Psoas muscle (tissue), 8 donors: ENCODE measurements at regions of chr16 and their contacts with region 1.

Region 1: DNA sequence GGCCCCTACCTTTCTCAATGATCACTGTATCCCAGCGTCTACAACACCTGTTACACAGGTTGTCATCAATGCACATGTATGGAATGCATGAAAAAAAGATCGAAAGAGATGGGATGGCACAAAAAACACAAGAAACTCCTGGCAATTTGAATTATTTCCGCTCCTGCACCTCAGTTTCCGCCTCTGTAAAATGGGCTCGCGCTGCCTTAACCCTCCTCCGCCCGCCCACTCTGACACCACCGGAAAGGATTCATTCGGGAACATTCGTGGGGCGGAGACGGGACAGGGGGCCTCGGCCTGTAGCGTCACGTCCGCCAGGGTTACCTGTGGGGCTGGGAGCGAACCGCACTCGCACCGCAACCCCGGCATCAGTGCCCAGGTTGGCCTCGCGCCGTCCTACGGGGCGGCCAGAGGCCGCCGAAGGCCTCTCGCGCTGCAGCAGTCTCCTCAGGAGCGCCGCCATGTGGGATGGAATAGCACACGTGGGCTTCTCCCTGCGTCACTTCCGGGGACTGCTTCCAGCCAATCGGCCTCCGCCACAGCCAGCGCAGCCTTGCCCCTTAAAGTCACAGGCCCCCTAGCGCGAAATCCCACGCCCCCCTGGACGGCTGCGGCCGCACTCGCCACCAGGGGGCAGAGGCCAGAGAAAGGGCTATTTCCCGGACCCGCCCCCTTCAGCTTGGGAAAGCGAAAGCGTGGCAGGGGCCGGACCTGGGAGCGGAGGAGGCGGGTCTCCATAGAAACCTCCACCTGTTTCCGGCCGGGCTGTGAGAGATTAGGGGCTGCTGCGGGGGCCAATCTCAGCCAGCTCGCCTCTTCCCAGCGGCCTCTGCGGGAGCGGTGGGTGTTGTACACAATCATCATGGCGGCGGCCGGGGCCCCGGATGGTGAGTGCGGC is at the starts of genes EARS2 and UBFD1:
- DNase-seq: peak; percentile 99
- ATAC-seq: peak; percentile 92 to 96 (median 93)
- H3K4me3 ChIP-seq: peak within 1 kb of the TSS; percentile 85
- H3K27ac ChIP-seq: peak within 1 kb of the TSS; percentile 93
- H3K4me1 ChIP-seq: peaks cover 43% of the 10 kb centered on the region
- H3K27me3 ChIP-seq: no peaks in the 10 kb centered on the region
- CTCF ChIP-seq: peak; percentile 92
- total RNA-seq, gene EARS2: 19.0 to 28.3 (median 20.9) TPM
- total RNA-seq, gene UBFD1: 108 to 147 (median 122) TPM

Region 2: GRCh38 chr16:23452572-23453337 is 104.4 kb before region 1 on chr16 and contains the start of gene COG7:
- intact Hi-C with region 1: loop called in 1 of 2 experiments (anchors 10 kb)
- DNase-seq: peak; percentile 92 to 94
- ATAC-seq: peak; percentile 93 to 98 (median 94)
- H3K4me3 ChIP-seq: peak within 1 kb of the TSS; percentile 83
- H3K27ac ChIP-seq: peak within 1 kb of the TSS; percentile 87
- H3K4me1 ChIP-seq: peaks cover 19% of the 10 kb centered on the region
- H3K27me3 ChIP-seq: no peaks in the 10 kb centered on the region
- CTCF ChIP-seq: no peak
- total RNA-seq, gene COG7: 6.7 to 9.6 (median 9.4) TPM

Region 3: DNA sequence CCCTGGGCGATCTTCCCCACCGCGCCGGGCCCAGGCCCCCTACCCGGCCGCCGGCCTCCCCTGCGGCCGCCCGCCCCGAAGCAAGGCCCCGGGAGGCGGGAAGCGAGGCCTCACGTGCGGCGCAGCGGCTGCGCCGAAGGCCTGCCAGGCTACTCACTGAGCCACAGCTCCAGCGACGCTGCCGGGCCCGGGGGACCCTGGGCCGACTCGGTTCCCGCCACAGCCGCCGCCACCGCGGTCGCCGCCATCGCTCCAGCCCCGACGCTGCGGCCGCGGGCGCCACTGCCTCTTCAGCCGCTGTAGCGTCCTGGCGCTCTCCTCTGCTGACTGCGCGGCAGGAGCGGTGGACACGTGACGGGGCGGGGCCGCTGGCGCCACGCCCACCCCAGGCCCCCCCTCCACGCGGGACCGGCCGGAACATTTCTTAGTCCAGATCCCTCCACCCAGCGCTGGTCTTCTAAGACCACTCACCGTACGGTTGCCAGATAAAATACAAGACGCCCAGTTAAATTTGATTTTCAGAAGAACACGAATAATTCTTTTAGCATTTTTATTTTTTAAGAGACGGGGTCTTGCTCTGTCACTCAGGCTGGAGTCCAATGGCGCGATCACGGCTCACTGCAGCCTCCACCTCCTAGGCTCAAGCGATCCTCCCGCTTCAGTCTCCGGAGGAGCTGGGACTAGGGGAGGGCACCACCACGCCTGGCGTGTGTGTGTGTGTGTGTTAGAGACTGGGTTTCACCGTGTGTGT is 46.8 kb before region 1 on chr16 and contains the start of gene GGA2:
- intact Hi-C with region 1: loop called in 1 of 2 experiments (anchors 5 kb)
- DNase-seq: peak; percentile 84 to 91
- ATAC-seq: peak; percentile 89 to 93 (median 90)
- H3K4me3 ChIP-seq: peak within 1 kb of the TSS; percentile 94
- H3K27ac ChIP-seq: peak within 1 kb of the TSS; percentile 95
- H3K4me1 ChIP-seq: peaks cover 11% of the 10 kb centered on the region
- H3K27me3 ChIP-seq: no peaks in the 10 kb centered on the region
- CTCF ChIP-seq: peak; percentile 11
- total RNA-seq, gene GGA2: 43.1 to 62.9 (median 56.4) TPM

Region 4: GRCh38 chr16:23595951-23596720 is 39.0 kb after region 1 on chr16 and contains the start of gene NDUFAB1:
- intact Hi-C with region 1: loop called (anchors 1 to 5 kb)
- DNase-seq: peak; percentile 94 to 96
- ATAC-seq: peak; percentile 96 to 99 (median 96)
- H3K4me3 ChIP-seq: peak within 1 kb of the TSS; percentile 90
- H3K27ac ChIP-seq: peak within 1 kb of the TSS; percentile 82
- H3K4me1 ChIP-seq: peaks cover 19% of the 10 kb centered on the region
- H3K27me3 ChIP-seq: no peaks in the 10 kb centered on the region
- CTCF ChIP-seq: peak; percentile 100
- total RNA-seq, gene NDUFAB1: 175 to 241 (median 210) TPM

Region 5: DNA sequence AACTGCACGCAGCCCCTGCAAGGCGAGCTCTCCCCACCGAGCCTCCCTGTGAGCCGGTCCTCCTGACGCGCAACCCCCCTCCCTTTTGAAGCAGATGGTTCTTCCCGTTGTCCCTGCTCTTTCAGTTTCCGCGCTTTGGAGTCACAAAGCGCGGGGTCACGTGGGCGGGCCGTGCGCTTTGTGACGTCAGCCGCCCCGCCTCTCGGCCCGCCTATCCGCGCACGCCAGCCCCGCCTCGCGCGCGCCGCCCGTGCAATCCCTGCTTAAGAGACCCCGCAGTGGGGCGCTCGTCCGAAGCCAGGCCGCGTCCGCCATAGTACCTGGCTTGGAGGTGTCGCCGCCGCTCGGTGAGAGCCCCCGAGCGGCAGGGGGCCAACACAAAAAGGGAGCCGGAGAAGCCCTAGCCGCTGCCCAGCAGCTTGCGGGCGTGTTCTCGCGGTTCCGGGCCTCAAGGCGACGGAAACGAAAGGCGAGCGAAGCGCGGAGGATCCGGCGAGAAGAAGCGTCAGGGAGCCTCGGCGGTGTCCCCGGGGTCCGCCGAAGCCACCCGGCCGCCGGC is 982.2 kb after region 1 on chr16 and contains the start of gene RBBP6:
- intact Hi-C with region 1: loop called in 1 of 2 experiments (anchors 10 kb)
- DNase-seq: peak; percentile 95 to 97
- ATAC-seq: peak; percentile 96 to 99 (median 98)
- H3K4me3 ChIP-seq: peak within 1 kb of the TSS; percentile 98
- H3K27ac ChIP-seq: peak within 1 kb of the TSS; percentile 100
- H3K4me1 ChIP-seq: peaks cover 12% of the 10 kb centered on the region
- H3K27me3 ChIP-seq: no peaks in the 10 kb centered on the region
- CTCF ChIP-seq: peak; percentile 27
- total RNA-seq, gene RBBP6: 21.8 to 30.7 (median 25.7) TPM